CD8-positive, alpha-beta memory T cell (primary cell): ENCODE measurements at regions of chr16 and their contacts with region 1.

Region 1: GRCh38 chr16:67183627-67184328 is at the start of gene MATCAP1:
- DNase-seq: peak; percentile 88 to 97 (median 96)
- H3K4me3 ChIP-seq: peak within 1 kb of the TSS; percentile 70
- H3K4me3 Mint-ChIP-seq: peak within 1 kb of the TSS in 5 of 7 donors; percentile 48 to 87 (median 71)
- H3K27ac ChIP-seq: peak within 1 kb of the TSS; percentile 91
- H3K27ac Mint-ChIP-seq: no peak within 1 kb of the TSS
- H3K4me1 ChIP-seq: peaks cover 25% of the 10 kb centered on the region
- H3K4me1 Mint-ChIP-seq: peaks cover 9 to 21% (median 10%) of the 10 kb centered on the region in 3 donors
- H3K27me3 ChIP-seq: no peaks in the 10 kb centered on the region
- H3K27me3 Mint-ChIP-seq: peaks cover 0 to 4% of the 10 kb centered on the region in 2 donors
- total RNA-seq, gene MATCAP1: 15.3 to 15.6 TPM

Region 2: DNA sequence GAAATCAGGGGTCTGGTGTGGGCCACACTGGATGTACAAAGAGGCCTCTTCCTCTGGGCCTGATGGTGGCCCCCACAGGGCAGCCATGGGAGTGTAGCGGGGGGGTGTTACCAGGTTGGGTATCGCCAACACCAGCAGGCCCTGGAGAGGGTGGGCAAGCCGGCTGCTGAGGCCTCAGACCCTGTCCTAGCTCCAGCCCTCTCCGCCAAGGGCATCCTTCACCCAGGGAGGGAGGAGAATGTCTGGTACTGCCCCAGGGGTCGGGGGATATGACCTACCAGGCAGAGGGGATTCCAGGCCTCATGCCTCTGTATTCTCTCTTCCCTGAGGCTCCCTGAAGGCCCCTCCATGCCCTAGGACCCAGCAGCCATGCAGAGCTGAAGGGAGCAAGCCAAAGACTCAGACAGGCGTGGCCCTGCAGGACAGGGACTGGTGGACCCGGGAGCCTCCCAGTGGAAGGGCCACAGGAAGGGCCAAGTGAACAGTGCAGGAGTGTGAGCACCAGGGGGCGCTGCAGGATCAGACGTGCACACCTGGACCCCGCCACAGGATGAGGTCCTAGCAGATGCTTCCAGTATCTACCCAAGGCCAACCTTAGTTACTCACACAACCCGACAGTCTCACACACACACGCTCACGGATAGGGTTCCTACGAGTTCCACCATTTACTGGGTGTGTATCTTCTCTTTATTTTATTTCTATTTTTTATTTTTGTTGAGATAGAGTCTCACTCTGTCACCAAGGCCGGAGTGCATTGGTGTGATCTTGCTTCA is 206.3 kb before region 1 on chr16:
- CTCF ChIA-PET with region 1: interaction called, 13 read pairs
- POLR2A ChIA-PET with region 1: no interaction called
- DNase-seq: peak; percentile 75 to 89 (median 81)
- H3K4me3 ChIP-seq: no peak overlapping the region
- H3K4me3 Mint-ChIP-seq: no peak overlapping the region
- H3K27ac ChIP-seq: no peak overlapping the region
- H3K27ac Mint-ChIP-seq: peak overlapping the region in 1 of 8 donors; percentile 58
- H3K4me1 ChIP-seq: no peaks in the 10 kb centered on the region
- H3K4me1 Mint-ChIP-seq: peaks cover 7 to 22% (median 19%) of the 10 kb centered on the region in 3 donors
- H3K27me3 ChIP-seq: no peaks in the 10 kb centered on the region
- H3K27me3 Mint-ChIP-seq: peaks cover 2 to 5% of the 10 kb centered on the region in 2 donors

Region 3: GRCh38 chr16:66984892-66985311 is 198.9 kb before region 1 on chr16:
- CTCF ChIA-PET with region 1: interaction called, 18 read pairs
- POLR2A ChIA-PET with region 1: no interaction called
- DNase-seq: no peak
- H3K4me3 ChIP-seq: no peak overlapping the region
- H3K4me3 Mint-ChIP-seq: peak overlapping the region in 1 of 7 donors; percentile 23
- H3K27ac ChIP-seq: no peak overlapping the region
- H3K27ac Mint-ChIP-seq: peak overlapping the region; percentile 35 to 93 (median 88)
- H3K4me1 ChIP-seq: peaks cover 24% of the 10 kb centered on the region
- H3K4me1 Mint-ChIP-seq: peaks cover 14 to 29% (median 26%) of the 10 kb centered on the region in 3 donors
- H3K27me3 ChIP-seq: no peaks in the 10 kb centered on the region
- H3K27me3 Mint-ChIP-seq: no peaks in the 10 kb centered on the region

Region 4: DNA sequence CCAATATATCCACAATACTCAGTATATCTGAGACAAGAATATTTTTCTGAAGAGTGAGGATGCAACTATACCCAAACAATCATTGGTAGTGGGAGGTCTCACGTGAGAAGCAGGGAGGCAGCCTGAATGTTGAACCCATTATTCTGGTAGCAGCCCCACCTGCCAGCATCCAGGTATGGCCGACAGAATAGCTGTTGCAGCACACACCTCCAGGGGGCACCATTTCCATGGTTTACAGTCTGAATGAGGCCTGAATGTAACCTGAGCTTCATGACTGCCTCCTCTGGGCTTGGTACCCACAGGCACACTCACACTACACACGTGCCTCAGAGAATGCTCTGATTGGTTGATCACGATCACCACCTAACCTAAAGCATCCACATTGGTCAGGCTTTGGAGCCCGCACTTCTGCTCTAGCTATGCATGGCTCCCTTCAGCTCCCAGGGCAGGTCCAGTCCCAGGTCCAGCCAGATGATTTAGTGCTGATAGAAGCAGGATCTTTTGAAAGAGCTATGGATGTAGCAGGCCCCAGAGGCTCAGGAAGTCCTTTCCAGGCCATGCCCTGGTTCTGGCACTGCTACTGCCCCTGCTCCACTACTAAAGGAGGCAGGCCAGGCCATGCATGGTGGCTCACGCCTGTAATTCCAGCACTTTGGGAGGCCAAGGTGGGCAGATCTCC is 165.8 kb before region 1 on chr16:
- CTCF ChIA-PET with region 1: interaction called, 26 read pairs
- POLR2A ChIA-PET with region 1: interaction called, 3 read pairs
- DNase-seq: peak; percentile 72 to 87 (median 77)
- H3K4me3 ChIP-seq: no peak overlapping the region
- H3K4me3 Mint-ChIP-seq: peak overlapping the region in 1 of 7 donors; percentile 61
- H3K27ac ChIP-seq: no peak overlapping the region
- H3K27ac Mint-ChIP-seq: peak overlapping the region in 3 of 8 donors; percentile 1 to 66 (median 64)
- H3K4me1 ChIP-seq: peaks cover 16% of the 10 kb centered on the region
- H3K4me1 Mint-ChIP-seq: peaks cover 2 to 9% (median 6%) of the 10 kb centered on the region in 3 donors
- H3K27me3 ChIP-seq: no peaks in the 10 kb centered on the region
- H3K27me3 Mint-ChIP-seq: peaks cover 0 to 3% of the 10 kb centered on the region in 2 donors

Region 5: GRCh38 chr16:67203446-67203845 is 19.7 kb after region 1 on chr16:
- CTCF ChIA-PET with region 1: no interaction called
- POLR2A ChIA-PET with region 1: no interaction called
- DNase-seq: no peak
- H3K4me3 ChIP-seq: no peak overlapping the region
- H3K4me3 Mint-ChIP-seq: no peak overlapping the region
- H3K27ac ChIP-seq: no peak overlapping the region
- H3K27ac Mint-ChIP-seq: no peak overlapping the region
- H3K4me1 ChIP-seq: no peaks in the 10 kb centered on the region
- H3K4me1 Mint-ChIP-seq: peaks cover 0 to 1% (median 0%) of the 10 kb centered on the region in 3 donors
- H3K27me3 ChIP-seq: no peaks in the 10 kb centered on the region
- H3K27me3 Mint-ChIP-seq: no peaks in the 10 kb centered on the region

Region 6: GRCh38 chr16:67226804-67227557 is 43.2 kb after region 1 on chr16 and contains the start of gene TMEM208:
- CTCF ChIA-PET with region 1: interaction called, 11 read pairs
- POLR2A ChIA-PET with region 1: no interaction called
- DNase-seq: peak; percentile 94 to 98 (median 96)
- H3K4me3 ChIP-seq: peak within 1 kb of the TSS; percentile 99
- H3K4me3 Mint-ChIP-seq: peak within 1 kb of the TSS; percentile 98 to 100 (median 99)
- H3K27ac ChIP-seq: peak within 1 kb of the TSS; percentile 94
- H3K27ac Mint-ChIP-seq: peak within 1 kb of the TSS; percentile 93 to 99 (median 98)
- H3K4me1 ChIP-seq: peaks cover 42% of the 10 kb centered on the region
- H3K4me1 Mint-ChIP-seq: peaks cover 39 to 60% (median 50%) of the 10 kb centered on the region in 3 donors
- H3K27me3 ChIP-seq: no peaks in the 10 kb centered on the region
- H3K27me3 Mint-ChIP-seq: peaks cover 0 to 2% of the 10 kb centered on the region in 2 donors
- total RNA-seq, gene TMEM208: 58.4 to 69.5 TPM